Esophagus squamous epithelium (tissue), 5 donors: ENCODE measurements at regions of chr2 and their contacts with region 1.

Region 1: GRCh38 chr2:219402665-219403515 is 15.2 kb upstream of the DNPEP start:
- DNase-seq: no peak
- H3K4me3 ChIP-seq: no peak overlapping the region
- H3K27ac ChIP-seq: peak overlapping the region in 3 of 4 donors; percentile 82 to 90 (median 82)
- H3K4me1 ChIP-seq: peaks cover 0 to 27% (median 12%) of the 10 kb centered on the region in 3 donors
- H3K27me3 ChIP-seq: peaks cover 0 to 16% (median 0%) of the 10 kb centered on the region in 4 donors
- CTCF ChIP-seq: peak; percentile 61 to 89 (median 85)
- POLR2A ChIP-seq: no peak

Region 2: DNA sequence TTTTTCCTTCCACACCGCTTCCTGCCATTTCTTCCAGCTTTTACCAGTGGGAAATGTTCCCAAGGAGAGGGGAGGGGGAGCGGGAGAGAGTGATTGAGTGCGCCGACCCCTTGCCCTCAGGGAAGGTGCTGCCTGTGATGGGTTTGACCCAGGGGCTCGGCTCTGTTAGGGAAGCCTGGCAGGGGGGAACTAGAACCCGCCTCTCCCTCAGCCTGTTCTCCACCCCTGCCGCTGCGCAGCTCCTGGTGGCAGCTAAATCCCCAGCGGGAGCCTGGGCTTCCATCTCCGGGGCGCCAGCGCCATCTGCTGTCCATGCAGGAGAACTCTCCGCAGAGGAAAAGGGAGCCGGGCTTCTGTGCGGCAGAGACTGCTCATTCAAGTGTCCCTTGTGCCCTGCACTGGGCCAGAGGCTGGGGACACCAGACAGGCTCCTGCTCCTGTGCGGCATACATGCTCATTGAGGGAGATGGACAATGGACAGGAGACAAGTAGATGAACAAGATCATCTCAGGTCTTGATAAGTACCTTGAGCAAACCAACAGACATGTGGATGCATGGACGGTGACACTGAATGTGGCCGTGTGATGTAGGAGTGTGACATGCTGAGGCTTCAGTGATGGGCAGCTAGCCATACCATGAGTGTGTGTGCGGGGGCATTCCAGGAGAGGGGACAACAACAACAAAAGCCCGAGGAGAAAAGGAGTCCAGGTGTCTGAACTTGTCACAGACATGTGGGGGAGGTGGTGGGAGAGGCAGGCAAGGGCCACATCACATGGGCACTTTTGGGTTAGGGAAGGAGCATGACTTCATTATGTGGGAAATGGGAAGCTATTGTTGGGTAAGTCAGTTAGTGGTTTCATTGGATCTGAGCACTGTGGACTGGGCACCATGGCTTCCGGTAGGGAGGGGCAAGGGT is 127.4 kb after region 1 on chr2:
- intact Hi-C with region 1: loop called (anchors 5 kb)
- DNase-seq: peak; percentile 16
- H3K4me3 ChIP-seq: peak overlapping the region in 1 of 4 donors; percentile 3
- H3K27ac ChIP-seq: no peak overlapping the region
- H3K4me1 ChIP-seq: peaks cover 0 to 7% (median 0%) of the 10 kb centered on the region in 3 donors
- H3K27me3 ChIP-seq: peaks cover 0 to 88% (median 2%) of the 10 kb centered on the region in 4 donors
- CTCF ChIP-seq: peak; percentile 89 to 99 (median 97)
- POLR2A ChIP-seq: no peak